ENCODE measurements at regions of chr5 and their contacts with region 1.

Region 1: GRCh38 chr5:73625944-73626811 is at the start of gene ARHGEF28:
- DNase-seq: peak; percentile 58 to 88
- H3K4me3 ChIP-seq: peak within 1 kb of the TSS; percentile 99
- H3K27ac ChIP-seq: peak within 1 kb of the TSS; percentile 63
- H3K4me1 ChIP-seq: peaks cover 62% of the 10 kb centered on the region
- H3K27me3 ChIP-seq: no peaks in the 10 kb centered on the region
- CTCF ChIP-seq: no peak
- total RNA-seq, gene ARHGEF28: 62.5 and 77.5 TPM in 2 replicates

Region 2: DNA sequence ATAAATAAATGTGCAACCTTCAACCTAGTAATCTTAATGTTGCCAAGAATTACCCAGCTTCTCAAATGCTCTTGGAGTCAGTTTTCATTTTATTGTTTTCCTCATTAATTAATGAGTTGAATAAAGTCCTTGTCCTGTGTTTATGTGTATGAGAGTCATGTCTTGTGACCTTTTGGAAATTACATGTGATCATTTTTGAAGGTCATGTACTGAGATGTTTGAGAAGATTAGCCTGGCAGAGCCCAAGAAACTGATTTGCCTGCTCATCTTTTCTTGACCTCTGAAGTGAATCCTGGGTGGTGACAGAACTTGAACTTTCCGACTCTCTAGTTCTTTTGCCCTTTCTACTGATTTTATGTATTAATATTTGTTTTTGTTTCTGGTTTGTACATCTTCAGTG is 76.2 kb before region 1 on chr5:
- CTCF ChIA-PET with region 1: no interaction called
- POLR2A ChIA-PET with region 1: no interaction called
- intact Hi-C with region 1: no loop called
- DNase-seq: no peak
- H3K4me3 ChIP-seq: no peak overlapping the region
- H3K27ac ChIP-seq: no peak overlapping the region
- H3K4me1 ChIP-seq: no peaks in the 10 kb centered on the region
- H3K27me3 ChIP-seq: no peaks in the 10 kb centered on the region
- CTCF ChIP-seq: no peak

Region 3: GRCh38 chr5:73605227-73606020 is 20.8 kb before region 1 on chr5:
- CTCF ChIA-PET with region 1: no interaction called
- POLR2A ChIA-PET with region 1: no interaction called
- intact Hi-C with region 1: loop called (anchors 1 kb)
- DNase-seq: peak; percentile 38 to 86
- H3K4me3 ChIP-seq: peak overlapping the region; percentile 30; the same call in 1 of the 2 replicates
- H3K27ac ChIP-seq: peak overlapping the region; percentile 74
- H3K4me1 ChIP-seq: peaks cover 40% of the 10 kb centered on the region
- H3K27me3 ChIP-seq: no peaks in the 10 kb centered on the region
- CTCF ChIP-seq: no peak

Region 4: GRCh38 chr5:73673161-73673591 is 47.0 kb after region 1 on chr5:
- CTCF ChIA-PET with region 1: no interaction called
- POLR2A ChIA-PET with region 1: interaction called, 22 read pairs
- intact Hi-C with region 1: no loop called
- DNase-seq: peak in 1 of 2 experiments; percentile 85
- H3K4me3 ChIP-seq: 0 out of 2 replicates have a peak overlapping the region, but pooled peaks have one; percentile 1
- H3K27ac ChIP-seq: peak overlapping the region; percentile 91
- H3K4me1 ChIP-seq: peaks cover 39% of the 10 kb centered on the region
- H3K27me3 ChIP-seq: no peaks in the 10 kb centered on the region
- CTCF ChIP-seq: no peak

Region 5: GRCh38 chr5:73693481-73694061 is 67.4 kb after region 1 on chr5:
- CTCF ChIA-PET with region 1: no interaction called
- POLR2A ChIA-PET with region 1: interaction called, 15 read pairs
- intact Hi-C with region 1: loop called (anchors 5 kb)
- DNase-seq: no peak
- H3K4me3 ChIP-seq: no peak overlapping the region
- H3K27ac ChIP-seq: no peak overlapping the region
- H3K4me1 ChIP-seq: peaks cover 35% of the 10 kb centered on the region
- H3K27me3 ChIP-seq: no peaks in the 10 kb centered on the region
- CTCF ChIP-seq: peak; percentile 66

Region 6: DNA sequence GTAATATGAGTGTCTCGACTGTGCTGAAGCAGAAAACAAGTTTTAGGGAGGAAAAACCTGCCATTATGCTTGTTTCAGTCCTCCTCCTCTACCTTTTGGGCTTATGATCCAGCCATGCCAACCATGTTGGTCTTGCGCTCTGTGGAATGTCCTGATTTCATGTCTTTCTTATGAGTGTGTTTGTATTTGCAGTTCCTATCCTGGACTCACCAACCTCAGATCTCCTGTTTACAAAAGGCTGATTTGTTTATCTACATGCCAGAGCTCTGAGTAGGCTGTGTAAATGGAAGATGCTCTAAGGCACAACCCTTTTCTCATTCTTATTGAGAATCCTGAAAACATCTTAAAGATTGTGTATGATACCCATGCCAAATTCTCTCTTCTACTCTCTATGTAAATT is 138.4 kb after region 1 on chr5:
- CTCF ChIA-PET with region 1: no interaction called
- POLR2A ChIA-PET with region 1: interaction called, 6 read pairs
- intact Hi-C with region 1: loop called (anchors 10 kb)
- DNase-seq: peak; percentile 42 to 86
- H3K4me3 ChIP-seq: no peak overlapping the region
- H3K27ac ChIP-seq: peak overlapping the region; percentile 68
- H3K4me1 ChIP-seq: peaks cover 23% of the 10 kb centered on the region
- H3K27me3 ChIP-seq: no peaks in the 10 kb centered on the region
- CTCF ChIP-seq: no peak

Region 7: GRCh38 chr5:73792687-73793320 is 166.6 kb after region 1 on chr5:
- CTCF ChIA-PET with region 1: no interaction called
- POLR2A ChIA-PET with region 1: interaction called, 11 read pairs
- intact Hi-C with region 1: no loop called
- DNase-seq: peak; percentile 58 to 72
- H3K4me3 ChIP-seq: no peak overlapping the region
- H3K27ac ChIP-seq: no peak overlapping the region
- H3K4me1 ChIP-seq: peaks cover 12% of the 10 kb centered on the region
- H3K27me3 ChIP-seq: no peaks in the 10 kb centered on the region
- CTCF ChIP-seq: peak; percentile 98